Activated CD8-positive, alpha-beta T cell treated with anti-CD3 and anti-CD28 coated beads for 36 hours (primary cell): ENCODE measurements at regions of chr7 and their contacts with region 1.

Region 1: DNA sequence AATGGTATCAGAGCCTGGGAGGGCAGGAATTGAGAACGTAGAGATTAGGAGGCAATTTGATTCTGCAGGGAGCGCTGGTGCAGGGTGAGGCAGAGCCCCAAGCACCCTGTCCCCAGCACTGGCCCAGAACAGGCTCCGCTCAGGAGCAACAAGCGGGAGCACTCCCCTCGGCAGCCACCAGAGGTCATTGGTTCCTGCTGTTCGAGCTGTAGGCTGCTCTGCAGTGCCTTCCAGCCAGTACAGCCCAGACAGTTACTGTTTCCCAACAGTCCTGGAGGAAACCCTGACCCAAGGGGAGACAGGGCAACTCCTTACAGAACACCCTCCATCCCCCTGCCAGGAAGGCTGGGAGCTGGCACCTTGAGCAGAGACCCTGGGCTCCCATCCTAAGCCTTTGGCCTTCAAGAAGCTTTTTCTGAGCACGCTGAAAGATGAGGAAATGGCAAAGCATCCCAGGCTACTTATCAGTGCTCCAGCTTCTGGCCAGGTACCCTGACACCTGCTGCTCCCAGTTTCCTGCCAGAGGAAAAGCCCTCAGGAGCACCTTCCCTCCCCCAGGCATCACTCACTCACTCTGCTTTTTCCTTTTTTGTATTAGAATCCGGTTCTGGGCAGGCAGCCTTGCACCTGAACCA is 71.2 kb upstream of the EFCAB10 start:
- DNase-seq: peak; percentile 81
- ATAC-seq: peak; percentile 95
- H3K4me3 Mint-ChIP-seq: no peak overlapping the region
- H3K27ac Mint-ChIP-seq: no peak overlapping the region
- H3K4me1 Mint-ChIP-seq: peaks cover 5% of the 10 kb centered on the region
- H3K27me3 Mint-ChIP-seq: no peaks in the 10 kb centered on the region
- CTCF ChIP-seq: peak; percentile 85

Region 2: DNA sequence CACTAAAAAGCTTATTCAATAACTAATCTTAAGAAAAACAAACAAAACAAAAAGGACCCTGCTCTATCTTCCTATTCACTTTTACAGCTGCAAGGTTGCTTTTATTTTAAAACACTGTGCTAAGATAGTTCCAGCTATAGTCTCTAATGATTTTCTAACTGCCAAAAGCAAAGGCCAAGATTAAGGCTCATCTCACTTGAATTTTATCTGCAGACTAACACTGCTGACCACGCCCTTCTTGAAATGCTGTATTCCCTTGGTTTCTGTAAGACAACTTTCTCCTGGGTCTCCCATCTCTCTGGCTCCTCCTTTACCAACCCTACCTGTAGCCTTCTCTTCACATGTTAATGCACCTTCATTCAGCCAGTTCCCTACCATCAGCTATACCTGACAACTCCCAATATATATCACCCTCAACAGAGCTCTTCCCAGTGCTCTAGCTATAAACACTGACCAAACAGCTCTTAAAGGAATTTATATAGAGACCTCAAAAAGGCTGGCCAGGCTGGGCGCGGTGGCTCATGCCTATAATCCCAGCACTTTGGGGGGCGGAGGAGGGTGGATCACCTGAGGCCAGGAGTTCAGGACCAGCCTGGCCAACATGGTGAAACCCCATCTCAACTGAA is 275.5 kb before region 1 on chr7:
- CTCF ChIA-PET with region 1: no interaction called
- POLR2A ChIA-PET with region 1: no interaction called
- intact Hi-C with region 1: no loop called
- DNase-seq: no peak
- ATAC-seq: no peak
- H3K4me3 Mint-ChIP-seq: no peak overlapping the region
- H3K27ac Mint-ChIP-seq: no peak overlapping the region
- H3K4me1 Mint-ChIP-seq: peaks cover 28% of the 10 kb centered on the region
- H3K27me3 Mint-ChIP-seq: no peaks in the 10 kb centered on the region
- CTCF ChIP-seq: no peak

Region 3: DNA sequence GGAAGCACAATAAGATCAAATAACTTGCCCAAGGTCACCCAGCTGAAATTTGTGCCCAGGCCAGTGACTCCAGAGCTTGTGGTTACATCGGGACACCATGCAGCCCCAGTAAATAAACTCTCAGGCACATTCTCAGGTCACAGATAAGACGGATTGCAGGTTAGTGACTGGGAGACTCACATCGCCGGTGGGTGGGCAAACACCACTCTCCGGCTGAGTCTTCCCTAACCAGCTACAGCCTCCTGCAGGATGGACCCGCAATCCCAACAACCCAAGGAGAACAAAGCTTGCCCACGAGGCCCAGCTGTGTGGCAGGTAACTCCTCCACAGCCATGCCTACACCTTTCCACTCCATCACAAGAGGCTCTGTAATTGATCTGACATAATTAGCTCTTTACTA is 10.5 kb after region 1 on chr7:
- CTCF ChIA-PET with region 1: interaction called, 22 read pairs
- POLR2A ChIA-PET with region 1: interaction called, 3 read pairs
- intact Hi-C with region 1: no loop called
- DNase-seq: no peak
- ATAC-seq: no peak
- H3K4me3 Mint-ChIP-seq: no peak overlapping the region
- H3K27ac Mint-ChIP-seq: no peak overlapping the region
- H3K4me1 Mint-ChIP-seq: no peaks in the 10 kb centered on the region
- H3K27me3 Mint-ChIP-seq: no peaks in the 10 kb centered on the region
- CTCF ChIP-seq: no peak

Region 4: GRCh38 chr7:105678811-105679495 is 26.5 kb after region 1 on chr7:
- CTCF ChIA-PET with region 1: interaction called, 48 read pairs
- POLR2A ChIA-PET with region 1: no interaction called
- intact Hi-C with region 1: no loop called
- DNase-seq: peak; percentile 18
- ATAC-seq: no peak
- H3K4me3 Mint-ChIP-seq: peak overlapping the region; percentile 71
- H3K27ac Mint-ChIP-seq: peak overlapping the region; percentile 89
- H3K4me1 Mint-ChIP-seq: peaks cover 57% of the 10 kb centered on the region
- H3K27me3 Mint-ChIP-seq: no peaks in the 10 kb centered on the region
- CTCF ChIP-seq: no peak

Region 5: DNA sequence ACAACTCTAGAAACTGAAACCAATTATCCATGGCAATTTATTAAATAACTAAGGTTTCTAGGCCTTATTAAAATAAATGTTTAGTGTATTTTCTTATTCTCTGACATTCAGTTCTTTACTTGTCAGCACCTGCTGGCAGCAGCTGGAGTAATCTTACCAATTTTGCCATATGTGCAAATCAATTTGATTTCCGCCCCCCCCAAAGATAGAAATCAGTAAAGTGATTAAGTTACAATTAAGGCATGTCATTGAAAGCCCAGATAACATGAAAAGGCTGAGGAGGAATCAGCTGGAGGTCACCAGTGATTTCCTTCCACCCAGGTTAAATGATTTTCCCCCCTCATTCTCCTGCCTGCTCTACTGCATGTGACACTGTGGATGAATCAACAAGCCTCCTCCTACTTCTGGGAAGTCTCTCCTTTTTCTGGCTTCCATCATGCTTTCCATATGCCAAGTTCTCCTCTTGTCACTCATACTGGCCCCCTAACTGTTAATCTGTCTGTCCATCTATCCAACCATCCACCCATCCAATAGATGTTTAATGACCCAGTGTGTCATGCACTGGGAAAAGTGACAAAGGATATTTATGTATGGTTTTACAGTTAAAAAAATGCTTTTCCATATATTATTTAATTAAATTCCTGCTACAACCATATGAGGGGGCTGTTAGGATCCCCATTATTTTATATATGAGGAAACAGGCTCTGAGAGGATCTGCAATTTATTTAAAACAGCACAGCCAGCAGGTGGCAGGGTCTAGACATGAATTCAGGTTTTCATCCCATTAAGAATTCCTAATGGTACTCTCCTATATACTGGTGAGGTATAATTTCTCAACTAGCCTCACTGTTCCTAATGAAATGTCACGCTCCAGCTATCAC is 107.4 kb after region 1 on chr7:
- CTCF ChIA-PET with region 1: interaction called, 19 read pairs
- POLR2A ChIA-PET with region 1: no interaction called
- intact Hi-C with region 1: loop called (anchors 5 kb)
- DNase-seq: peak; percentile 40
- ATAC-seq: no peak
- H3K4me3 Mint-ChIP-seq: no peak overlapping the region
- H3K27ac Mint-ChIP-seq: no peak overlapping the region
- H3K4me1 Mint-ChIP-seq: peaks cover 26% of the 10 kb centered on the region
- H3K27me3 Mint-ChIP-seq: no peaks in the 10 kb centered on the region
- CTCF ChIP-seq: peak; percentile 82

Region 6: GRCh38 chr7:106029944-106030343 is 377.5 kb after region 1 on chr7:
- CTCF ChIA-PET with region 1: interaction called, 13 read pairs
- POLR2A ChIA-PET with region 1: no interaction called
- intact Hi-C with region 1: no loop called
- DNase-seq: no peak
- ATAC-seq: no peak
- H3K4me3 Mint-ChIP-seq: no peak overlapping the region
- H3K27ac Mint-ChIP-seq: no peak overlapping the region
- H3K4me1 Mint-ChIP-seq: peaks cover 15% of the 10 kb centered on the region
- H3K27me3 Mint-ChIP-seq: no peaks in the 10 kb centered on the region
- CTCF ChIP-seq: no peak